Activated CD4-positive, alpha-beta memory T cell treated with anti-CD3 and anti-CD28 coated beads for 36 hours (primary cell): ENCODE measurements at regions of chr2 and their contacts with region 1.

Region 1: DNA sequence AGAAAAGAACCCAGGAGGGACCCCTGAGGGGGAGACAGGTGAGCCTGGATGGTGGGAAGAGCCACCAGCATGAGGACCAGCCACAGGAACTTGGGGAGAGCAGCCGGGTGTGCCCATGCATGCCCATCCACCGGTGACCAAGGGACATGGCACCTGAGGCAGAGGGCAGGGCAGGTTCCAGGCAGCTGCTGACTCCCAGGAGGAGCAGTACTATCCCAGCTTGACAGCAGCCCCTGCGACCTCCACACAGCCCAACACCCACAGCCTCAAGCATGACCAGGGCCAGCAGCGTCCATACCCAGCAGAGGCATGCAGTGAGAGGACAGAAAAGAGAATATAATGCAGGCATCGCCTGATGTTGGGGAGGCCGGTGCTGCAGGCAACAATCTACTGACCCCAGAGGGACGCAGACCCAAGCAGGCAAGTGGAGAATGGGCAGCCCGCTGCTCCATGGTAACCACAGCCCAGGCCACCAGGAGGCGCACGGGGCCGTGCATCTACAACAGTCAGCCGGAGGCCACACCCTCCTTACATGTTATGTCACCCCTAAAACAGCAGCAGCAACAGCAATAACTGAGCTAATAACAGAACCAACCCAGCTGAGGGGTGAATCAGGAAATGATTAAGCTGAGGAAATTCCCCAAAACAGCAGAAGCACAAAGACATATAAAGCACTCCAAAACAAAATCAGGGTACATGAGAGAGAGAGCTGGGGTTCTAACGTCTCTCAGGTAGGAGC is 44.1 kb downstream of the ANKMY1 start:
- DNase-seq: peak; percentile 91
- H3K4me3 Mint-ChIP-seq: no peak overlapping the region
- H3K27ac Mint-ChIP-seq: peak overlapping the region; percentile 70
- H3K4me1 Mint-ChIP-seq: peaks cover 15% of the 10 kb centered on the region
- H3K27me3 Mint-ChIP-seq: no peaks in the 10 kb centered on the region

Region 2: GRCh38 chr2:240412211-240412861 is 101.4 kb before region 1 on chr2:
- CTCF ChIA-PET with region 1: no interaction called
- POLR2A ChIA-PET with region 1: no interaction called
- intact Hi-C with region 1: no loop called
- DNase-seq: no peak
- H3K4me3 Mint-ChIP-seq: no peak overlapping the region
- H3K27ac Mint-ChIP-seq: no peak overlapping the region
- H3K4me1 Mint-ChIP-seq: no peaks in the 10 kb centered on the region
- H3K27me3 Mint-ChIP-seq: peaks cover 1% of the 10 kb centered on the region

Region 3: GRCh38 chr2:240441331-240441992 is 72.3 kb before region 1 on chr2:
- CTCF ChIA-PET with region 1: no interaction called
- POLR2A ChIA-PET with region 1: no interaction called
- intact Hi-C with region 1: no loop called
- DNase-seq: no peak
- H3K4me3 Mint-ChIP-seq: no peak overlapping the region
- H3K27ac Mint-ChIP-seq: no peak overlapping the region
- H3K4me1 Mint-ChIP-seq: peaks cover 6% of the 10 kb centered on the region
- H3K27me3 Mint-ChIP-seq: peaks cover 15% of the 10 kb centered on the region

Region 4: DNA sequence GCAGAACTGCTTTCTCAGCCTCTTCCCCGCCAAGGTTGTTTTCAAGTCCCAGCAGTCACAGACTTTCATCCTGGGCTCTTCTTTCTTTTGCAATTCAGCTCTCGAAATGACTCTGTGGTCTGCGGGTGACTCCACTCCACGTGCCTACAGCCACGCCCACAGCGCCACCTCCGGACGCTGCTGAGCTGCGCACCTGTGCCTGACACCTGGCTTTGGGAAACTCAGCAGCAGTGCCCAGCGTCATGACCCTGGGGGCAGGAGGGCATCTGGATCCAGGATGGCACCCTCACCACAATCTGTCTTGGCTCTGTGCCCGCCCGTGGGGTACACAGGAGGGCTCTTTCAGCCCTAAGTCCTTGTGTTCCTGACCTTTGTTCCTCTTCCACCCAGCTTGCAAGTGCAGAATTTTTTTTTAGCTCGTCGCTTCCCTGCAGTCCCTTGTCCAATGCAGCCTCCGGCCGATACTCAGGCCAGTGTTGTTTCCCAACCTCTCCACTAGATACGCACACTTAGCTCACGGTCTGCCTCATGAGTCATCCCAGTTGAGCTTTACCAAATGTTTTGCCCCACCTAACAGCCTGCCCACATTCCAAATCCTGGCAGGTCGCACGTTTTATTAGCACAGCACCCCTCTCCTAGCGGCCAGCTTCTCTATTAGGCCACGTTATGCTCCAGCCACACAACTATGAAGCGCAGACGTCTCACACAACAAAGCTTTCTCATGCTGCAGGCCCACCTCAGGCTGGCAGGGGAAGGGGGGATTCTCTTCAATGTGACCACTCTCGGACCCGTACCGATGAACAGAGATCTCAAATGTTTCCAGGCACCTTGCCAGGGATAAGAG is 66.3 kb after region 1 on chr2:
- CTCF ChIA-PET with region 1: interaction called, 11 read pairs
- POLR2A ChIA-PET with region 1: no interaction called
- intact Hi-C with region 1: no loop called
- DNase-seq: peak; percentile 91
- H3K4me3 Mint-ChIP-seq: no peak overlapping the region
- H3K27ac Mint-ChIP-seq: peak overlapping the region; percentile 90
- H3K4me1 Mint-ChIP-seq: peaks cover 39% of the 10 kb centered on the region
- H3K27me3 Mint-ChIP-seq: no peaks in the 10 kb centered on the region

Region 5: DNA sequence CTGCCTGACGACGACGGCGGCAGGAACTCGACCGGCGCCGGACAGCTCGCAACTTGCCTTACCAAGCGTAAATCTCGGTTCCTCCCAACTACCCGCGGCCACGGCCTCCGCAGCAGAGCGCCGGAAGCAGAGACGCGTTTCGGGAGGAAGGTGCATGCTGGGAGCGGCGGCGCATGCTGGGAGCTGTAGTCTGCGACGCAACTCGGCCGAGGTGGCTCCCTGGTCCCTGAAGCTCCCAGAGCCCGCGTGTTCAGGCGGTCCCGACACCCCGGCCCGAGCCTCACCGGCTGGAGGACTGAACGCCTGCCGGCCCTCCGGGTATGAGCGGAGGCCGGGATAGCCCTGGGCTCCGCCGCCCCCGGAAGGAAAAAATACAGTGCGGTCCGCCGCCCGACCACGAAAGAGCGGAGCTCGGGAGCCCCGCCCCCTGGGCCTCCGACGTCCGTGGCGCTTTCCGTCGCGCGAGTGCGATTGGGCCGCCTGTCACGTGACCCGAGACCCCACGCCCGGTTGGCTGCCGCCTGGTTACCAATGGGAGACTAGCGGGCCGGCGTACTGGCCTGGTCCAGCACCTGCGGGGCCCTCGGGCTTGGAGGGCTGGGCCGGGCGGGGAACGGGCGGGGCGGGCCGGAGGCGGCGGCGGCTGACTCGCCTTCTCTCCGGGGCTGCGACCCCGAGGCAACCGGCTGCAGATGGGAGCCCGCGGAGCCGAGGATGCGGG is 72.6 kb after region 1 on chr2 and contains the start of gene CAPN10:
- CTCF ChIA-PET with region 1: interaction called, 18 read pairs
- POLR2A ChIA-PET with region 1: interaction called, 6 read pairs
- intact Hi-C with region 1: loop called (anchors 2 kb)
- DNase-seq: peak; percentile 98
- H3K4me3 Mint-ChIP-seq: peak within 1 kb of the TSS; percentile 98
- H3K27ac Mint-ChIP-seq: peak within 1 kb of the TSS; percentile 86
- H3K4me1 Mint-ChIP-seq: peaks cover 39% of the 10 kb centered on the region
- H3K27me3 Mint-ChIP-seq: no peaks in the 10 kb centered on the region
- total RNA-seq, gene CAPN10: 32.6 to 33.9 TPM

Region 6: GRCh38 chr2:240704651-240705050 is 190.9 kb after region 1 on chr2:
- CTCF ChIA-PET with region 1: interaction called, 3 read pairs
- POLR2A ChIA-PET with region 1: no interaction called
- intact Hi-C with region 1: loop called (anchors 10 kb)
- DNase-seq: peak; percentile 53
- H3K4me3 Mint-ChIP-seq: peak overlapping the region; percentile 9
- H3K27ac Mint-ChIP-seq: no peak overlapping the region
- H3K4me1 Mint-ChIP-seq: peaks cover 13% of the 10 kb centered on the region
- H3K27me3 Mint-ChIP-seq: peaks cover 17% of the 10 kb centered on the region

Region 7: GRCh38 chr2:240840435-240841080 is 326.8 kb after region 1 on chr2:
- CTCF ChIA-PET with region 1: interaction called, 11 read pairs
- POLR2A ChIA-PET with region 1: no interaction called
- intact Hi-C with region 1: loop called (anchors 5 kb)
- DNase-seq: no peak
- H3K4me3 Mint-ChIP-seq: no peak overlapping the region
- H3K27ac Mint-ChIP-seq: no peak overlapping the region
- H3K4me1 Mint-ChIP-seq: no peaks in the 10 kb centered on the region
- H3K27me3 Mint-ChIP-seq: peaks cover 1% of the 10 kb centered on the region